WTC11 (cell line): ENCODE measurements at regions of chr18 and their contacts with region 1.

Region 1: GRCh38 chr18:3665780-3666525 is 216.0 kb downstream of the TGIF1 start:
- DNase-seq: peak; percentile 85
- ATAC-seq: peak; percentile 89
- H3K4me3 Mint-ChIP-seq: peak overlapping the region; percentile 65
- H3K27ac Mint-ChIP-seq: peak overlapping the region; percentile 98
- H3K4me1 Mint-ChIP-seq: peaks cover 27% of the 10 kb centered on the region
- H3K27me3 Mint-ChIP-seq: no peaks in the 10 kb centered on the region
- CTCF ChIP-seq: peak; percentile 94

Region 2: DNA sequence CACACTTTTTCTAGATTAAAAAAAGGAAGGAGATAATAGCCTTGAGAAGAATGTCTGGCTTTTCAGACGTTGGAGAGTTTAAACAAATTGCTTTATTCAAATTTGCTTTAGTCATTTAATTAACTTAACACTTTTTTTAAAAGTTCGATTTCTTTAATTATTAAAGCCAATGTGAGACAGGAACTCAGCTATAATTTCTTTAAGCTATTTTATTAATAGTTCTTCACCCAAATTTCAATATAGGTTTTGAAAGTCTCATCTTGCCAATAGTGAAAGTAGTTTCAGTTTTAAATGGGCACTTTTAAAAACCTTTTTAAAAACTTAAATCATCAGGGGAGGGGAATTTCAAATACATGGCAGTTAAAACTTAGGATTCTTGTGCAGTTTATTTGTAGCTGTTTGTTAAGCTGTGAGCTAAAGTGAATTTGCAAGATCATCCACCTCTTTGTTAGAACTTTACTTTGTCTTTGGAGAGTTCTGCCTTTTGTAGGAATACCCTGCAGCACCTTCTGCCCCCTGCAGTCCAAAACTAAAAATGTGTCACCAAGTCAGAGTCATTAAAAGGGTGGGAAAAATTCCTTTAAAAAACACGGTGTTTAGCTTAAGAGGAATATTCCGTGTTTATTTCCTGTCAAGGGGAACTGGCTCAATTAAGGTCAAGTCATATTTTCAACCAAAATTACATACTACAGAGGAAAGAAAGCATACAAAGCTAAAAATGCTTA is 211.4 kb before region 1 on chr18:
- CTCF ChIA-PET with region 1: interaction called, 37 read pairs
- POLR2A ChIA-PET with region 1: interaction called, 3 read pairs
- DNase-seq: peak; percentile 45
- ATAC-seq: peak; percentile 7
- H3K4me3 Mint-ChIP-seq: peak overlapping the region; percentile 96
- H3K27ac Mint-ChIP-seq: peak overlapping the region; percentile 98
- H3K4me1 Mint-ChIP-seq: peaks cover 62% of the 10 kb centered on the region
- H3K27me3 Mint-ChIP-seq: no peaks in the 10 kb centered on the region
- CTCF ChIP-seq: peak; percentile 46

Region 3: DNA sequence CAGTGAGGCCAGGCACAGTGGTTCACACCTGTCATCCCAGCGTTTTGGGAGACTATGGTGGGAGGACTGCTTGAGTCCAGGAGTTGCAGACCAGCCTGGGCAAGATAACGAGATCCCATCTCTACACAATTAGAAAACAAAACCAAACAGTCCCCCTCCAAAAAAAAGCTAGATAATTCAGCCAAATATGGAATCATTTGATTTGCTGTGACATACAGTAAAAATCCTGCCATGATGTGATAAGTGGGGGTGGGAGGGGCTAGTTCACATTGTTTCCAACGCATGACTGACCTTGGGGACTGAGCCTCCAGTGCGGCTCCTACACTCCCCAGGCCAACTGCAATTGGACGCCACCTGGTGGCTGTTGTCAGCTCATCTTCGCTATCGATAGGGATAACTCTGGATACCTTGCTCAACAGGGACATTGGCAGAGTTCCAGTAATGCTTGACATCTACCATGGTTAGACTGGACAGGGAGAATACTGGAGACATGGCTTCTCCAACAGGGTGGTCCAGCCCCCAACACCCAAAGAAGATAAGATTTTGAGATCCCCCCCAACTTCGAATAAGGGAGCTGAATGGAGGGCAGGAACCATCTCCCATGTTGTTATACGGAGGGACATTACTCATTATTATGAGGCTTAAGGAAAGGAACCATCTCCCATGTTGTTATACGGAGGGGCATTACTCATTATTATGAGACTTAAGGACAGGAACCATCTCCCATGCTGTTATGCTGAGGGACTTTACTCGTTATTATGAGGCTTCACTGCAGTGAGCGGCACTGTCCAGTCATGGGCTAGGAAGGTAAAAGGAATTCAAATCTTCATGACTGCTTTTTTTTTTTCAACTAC is 80.1 kb before region 1 on chr18:
- CTCF ChIA-PET with region 1: interaction called, 30 read pairs
- POLR2A ChIA-PET with region 1: no interaction called
- DNase-seq: peak; percentile 90
- ATAC-seq: peak; percentile 86
- H3K4me3 Mint-ChIP-seq: no peak overlapping the region
- H3K27ac Mint-ChIP-seq: peak overlapping the region; percentile 96
- H3K4me1 Mint-ChIP-seq: peaks cover 63% of the 10 kb centered on the region
- H3K27me3 Mint-ChIP-seq: peaks cover 7% of the 10 kb centered on the region
- CTCF ChIP-seq: peak; percentile 72

Region 4: GRCh38 chr18:3623769-3624545 is 42.0 kb before region 1 on chr18:
- CTCF ChIA-PET with region 1: interaction called, 16 read pairs
- POLR2A ChIA-PET with region 1: interaction called, 4 read pairs
- DNase-seq: peak; percentile 45
- ATAC-seq: peak; percentile 69
- H3K4me3 Mint-ChIP-seq: peak overlapping the region; percentile 39
- H3K27ac Mint-ChIP-seq: peak overlapping the region; percentile 98
- H3K4me1 Mint-ChIP-seq: peaks cover 38% of the 10 kb centered on the region
- H3K27me3 Mint-ChIP-seq: no peaks in the 10 kb centered on the region
- CTCF ChIP-seq: no peak

Region 5: GRCh38 chr18:3655254-3656050 is 10.5 kb before region 1 on chr18:
- CTCF ChIA-PET with region 1: interaction called, 19 read pairs
- POLR2A ChIA-PET with region 1: no interaction called
- DNase-seq: no peak
- ATAC-seq: peak; percentile 24
- H3K4me3 Mint-ChIP-seq: no peak overlapping the region
- H3K27ac Mint-ChIP-seq: peak overlapping the region; percentile 57
- H3K4me1 Mint-ChIP-seq: peaks cover 41% of the 10 kb centered on the region
- H3K27me3 Mint-ChIP-seq: peaks cover 6% of the 10 kb centered on the region
- CTCF ChIP-seq: no peak

Region 6: GRCh38 chr18:3869848-3870247 is 203.9 kb after region 1 on chr18:
- CTCF ChIA-PET with region 1: interaction called, 31 read pairs
- POLR2A ChIA-PET with region 1: no interaction called
- DNase-seq: no peak
- ATAC-seq: peak; percentile 71
- H3K4me3 Mint-ChIP-seq: no peak overlapping the region
- H3K27ac Mint-ChIP-seq: no peak overlapping the region
- H3K4me1 Mint-ChIP-seq: peaks cover 42% of the 10 kb centered on the region
- H3K27me3 Mint-ChIP-seq: no peaks in the 10 kb centered on the region
- CTCF ChIP-seq: 0 out of 2 replicates have a peak, but pooled peaks have one; percentile 28